ENCODE measurements at regions of chr17 and their contacts with region 1.

Region 1: DNA sequence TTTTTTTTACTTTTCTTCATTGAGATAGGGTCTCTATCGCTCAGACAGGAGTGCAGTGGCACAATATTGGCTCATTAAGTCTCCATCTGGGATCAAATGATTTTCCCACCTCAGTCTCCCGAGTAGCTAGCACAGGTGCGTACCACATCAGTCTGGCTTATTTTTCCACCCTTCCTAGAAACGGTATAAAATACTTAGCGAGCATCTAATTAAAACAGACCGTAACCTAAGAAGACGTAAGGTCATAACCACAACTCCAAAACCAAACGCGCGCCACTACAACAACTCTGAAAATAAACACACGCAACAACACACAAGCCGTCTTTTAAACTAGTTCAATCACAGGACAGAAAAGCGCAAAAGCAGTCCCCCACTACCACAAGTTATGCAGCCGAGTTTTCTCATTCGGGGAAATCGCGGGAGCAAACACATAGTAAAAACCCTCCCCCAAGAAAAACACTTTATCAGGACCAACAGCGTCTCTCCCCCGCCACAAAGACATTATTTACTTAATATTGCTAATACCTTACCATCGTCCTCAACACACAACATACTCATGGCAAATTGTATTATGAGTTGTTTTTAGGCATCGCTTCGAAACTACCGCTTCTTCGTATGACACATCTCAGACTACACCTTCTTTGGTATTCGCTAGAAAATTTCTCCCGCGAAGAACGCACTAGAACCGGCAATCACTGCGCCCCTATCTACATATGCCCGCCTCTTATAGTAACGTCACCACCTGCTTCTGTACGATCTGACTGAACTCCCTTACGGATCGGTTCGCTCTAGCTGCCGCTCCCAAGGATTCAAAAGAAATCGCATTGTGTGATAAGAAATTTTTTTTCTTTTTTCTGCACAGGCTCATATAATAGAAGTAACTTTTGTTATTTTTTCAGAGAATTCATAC is 32.8 kb downstream of the TEX14 start:
- DNase-seq: peak in 4 of 5 donors; percentile 76 to 84 (median 78)
- ATAC-seq: peak; percentile 95 to 98 (median 97)
- H3K4me3 ChIP-seq: peak overlapping the region in 11 of 12 donors; percentile 34 to 74 (median 48)
- H3K27ac ChIP-seq: peak overlapping the region; percentile 58 to 90 (median 80)
- H3K4me1 ChIP-seq: peaks cover 0 to 12% (median 0%) of the 10 kb centered on the region in 12 donors
- H3K27me3 ChIP-seq: no peaks in the 10 kb centered on the region
- CTCF ChIP-seq: peak in 1 of 12 donors; percentile 15
- POLR2A ChIP-seq: peak; percentile 93 to 98

Region 2: DNA sequence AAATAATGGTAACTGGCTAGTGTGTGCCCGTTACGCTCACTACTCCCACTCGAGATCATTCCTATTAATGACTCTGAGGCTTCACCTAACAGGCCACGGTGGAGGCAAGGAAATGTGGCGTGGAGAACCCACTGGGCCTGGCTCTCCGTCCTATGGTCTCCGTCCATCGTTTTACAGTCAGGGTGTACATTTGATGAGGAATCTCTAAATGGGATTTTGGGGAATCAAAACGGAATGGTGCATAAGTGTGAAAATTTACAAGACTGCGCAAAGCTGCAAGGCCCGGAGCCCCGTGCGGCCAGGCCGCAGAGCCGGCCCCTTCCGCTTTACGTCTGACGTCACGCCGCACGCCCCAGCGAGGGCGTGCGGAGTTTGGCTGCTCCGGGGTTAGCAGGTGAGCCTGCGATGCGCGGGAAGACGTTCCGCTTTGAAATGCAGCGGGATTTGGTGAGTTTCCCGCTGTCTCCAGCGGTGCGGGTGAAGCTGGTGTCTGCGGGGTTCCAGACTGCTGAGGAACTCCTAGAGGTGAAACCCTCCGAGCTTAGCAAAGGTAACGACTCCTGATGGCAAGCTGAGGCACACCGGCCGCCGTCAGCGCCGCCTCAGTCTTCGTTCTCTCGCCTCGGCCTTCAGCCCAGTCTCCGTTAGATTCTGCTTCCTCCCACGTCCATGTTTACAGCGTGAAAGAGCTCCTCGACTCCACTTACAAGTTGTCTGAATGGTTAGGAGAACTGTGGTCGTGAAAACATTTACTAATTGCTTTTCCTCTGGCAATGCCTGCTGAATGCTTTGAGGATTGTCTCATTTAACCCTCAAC is 33.4 kb after region 1 on chr17 and contains the start of gene RAD51C:
- intact Hi-C with region 1: loop called in 1 of 10 experiments (anchors 2 kb)
- DNase-seq: peak; percentile 86 to 93 (median 87)
- ATAC-seq: peak; percentile 89 to 100 (median 100)
- H3K4me3 ChIP-seq: peak within 1 kb of the TSS; percentile 45 to 87 (median 70)
- H3K27ac ChIP-seq: peak within 1 kb of the TSS in 11 of 12 donors; percentile 53 to 91 (median 79)
- H3K4me1 ChIP-seq: peaks cover 0 to 19% (median 11%) of the 10 kb centered on the region in 12 donors
- H3K27me3 ChIP-seq: no peaks in the 10 kb centered on the region
- CTCF ChIP-seq: no peak
- POLR2A ChIP-seq: peak in 1 of 2 donors; percentile 57
- total RNA-seq, gene RAD51C: 17.1 to 48.9 (median 39.6) TPM

Measured in heart left ventricle (tissue), 16 donors.